A673 (cell line): ENCODE measurements at regions of chr1 and their contacts with region 1.

Region 1: DNA sequence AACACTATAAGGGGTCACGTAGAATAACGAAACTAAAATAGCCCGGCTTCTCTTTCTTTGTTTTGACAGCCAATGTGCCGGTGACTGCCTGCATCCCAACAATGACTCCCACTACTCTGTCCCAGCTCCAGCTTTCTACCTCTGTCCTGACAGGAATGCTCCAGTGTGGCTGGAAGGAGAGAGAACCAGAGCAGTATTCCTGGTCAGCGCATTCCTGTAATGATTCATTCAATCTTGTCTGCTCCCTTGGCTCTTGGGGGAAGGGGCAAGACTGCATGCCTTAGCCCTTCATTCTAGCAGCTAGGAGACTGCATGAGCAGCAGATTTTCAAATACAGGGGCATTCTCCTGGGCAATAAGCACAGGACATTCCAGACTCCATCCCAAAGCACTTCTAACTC is 132.1 kb upstream of the PRMT6 start:
- DNase-seq: peak; percentile 24
- H3K4me3 ChIP-seq: no peak overlapping the region
- H3K27ac ChIP-seq: peak overlapping the region; percentile 98
- H3K4me1 ChIP-seq: peaks cover 74% of the 10 kb centered on the region
- H3K27me3 ChIP-seq: no peaks in the 10 kb centered on the region
- CTCF ChIP-seq: no peak

Region 2: DNA sequence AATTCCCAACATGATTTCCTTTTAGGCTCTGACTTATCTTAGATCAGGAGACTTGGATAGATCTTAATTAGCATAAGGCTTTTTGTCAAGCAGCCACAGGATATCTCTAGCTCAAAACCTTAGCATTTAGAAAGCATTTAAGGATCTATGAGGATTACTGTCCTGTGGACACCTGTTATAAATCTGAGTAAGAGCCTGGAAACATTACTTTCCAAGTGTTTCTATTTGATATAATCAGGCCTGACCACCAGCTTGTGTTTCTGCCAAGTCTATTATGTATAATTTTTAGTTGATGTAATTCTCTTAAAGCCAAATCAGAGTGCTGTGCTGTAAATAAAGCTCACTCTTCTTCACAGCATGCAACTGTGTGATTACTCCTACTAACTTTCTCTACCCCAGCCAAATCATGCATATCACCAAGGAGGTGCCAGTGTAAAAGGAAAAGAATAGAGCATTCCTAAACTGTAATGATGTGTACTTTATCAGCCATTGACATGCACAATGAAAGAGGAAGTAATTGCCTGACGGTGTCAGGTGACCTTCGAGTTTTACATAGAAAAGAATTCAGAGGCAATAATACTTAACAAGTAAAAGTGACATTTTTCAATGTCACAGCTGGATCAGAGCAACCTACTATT is 177.8 kb before region 1 on chr1:
- CTCF ChIA-PET with region 1: no interaction called
- POLR2A ChIA-PET with region 1: no interaction called
- intact Hi-C with region 1: loop called (anchors 2 kb)
- DNase-seq: peak; percentile 97
- H3K4me3 ChIP-seq: no peak overlapping the region
- H3K27ac ChIP-seq: peak overlapping the region; percentile 55
- H3K4me1 ChIP-seq: peaks cover 33% of the 10 kb centered on the region
- H3K27me3 ChIP-seq: no peaks in the 10 kb centered on the region
- CTCF ChIP-seq: no peak

Region 3: DNA sequence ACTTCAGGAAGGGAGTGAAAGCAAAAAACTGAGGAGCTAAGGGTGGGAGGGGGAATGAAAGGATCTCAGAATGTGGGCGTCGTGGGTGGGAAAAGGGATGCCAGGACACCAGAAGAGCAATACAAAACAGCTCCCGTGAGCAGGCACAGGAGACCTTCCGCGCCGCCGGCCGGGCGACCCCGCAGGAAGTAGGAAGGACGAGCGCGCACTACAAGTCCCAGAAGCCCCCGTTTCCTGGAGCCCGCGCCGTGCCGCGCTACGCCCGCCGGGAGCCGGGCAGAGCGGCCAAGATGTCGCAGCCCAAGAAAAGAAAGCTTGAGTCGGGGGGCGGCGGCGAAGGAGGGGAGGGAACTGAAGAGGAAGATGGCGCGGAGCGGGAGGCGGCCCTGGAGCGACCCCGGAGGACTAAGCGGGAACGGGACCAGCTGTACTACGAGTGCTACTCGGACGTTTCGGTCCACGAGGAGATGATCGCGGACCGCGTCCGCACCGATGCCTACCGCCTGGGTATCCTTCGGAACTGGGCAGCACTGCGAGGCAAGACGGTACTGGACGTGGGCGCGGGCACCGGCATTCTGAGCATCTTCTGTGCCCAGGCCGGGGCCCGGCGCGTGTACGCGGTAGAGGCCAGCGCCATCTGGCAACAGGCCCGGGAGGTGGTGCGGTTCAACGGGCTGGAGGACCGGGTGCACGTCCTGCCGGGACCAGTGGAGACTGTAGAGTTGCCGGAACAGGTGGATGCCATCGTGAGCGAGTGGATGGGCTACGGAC is 132.3 kb after region 1 on chr1 and contains the start of gene PRMT6:
- CTCF ChIA-PET with region 1: no interaction called
- POLR2A ChIA-PET with region 1: no interaction called
- intact Hi-C with region 1: loop called (anchors 1 kb)
- DNase-seq: peak; percentile 94
- H3K4me3 ChIP-seq: peak within 1 kb of the TSS; percentile 78
- H3K27ac ChIP-seq: peak within 1 kb of the TSS; percentile 89
- H3K4me1 ChIP-seq: peaks cover 13% of the 10 kb centered on the region
- H3K27me3 ChIP-seq: no peaks in the 10 kb centered on the region
- CTCF ChIP-seq: no peak
- total RNA-seq, gene PRMT6: 50.4 and 53.0 TPM in 2 replicates

Region 4: GRCh38 chr1:107529502-107530149 is 605.3 kb after region 1 on chr1:
- CTCF ChIA-PET with region 1: no interaction called
- POLR2A ChIA-PET with region 1: no interaction called
- intact Hi-C with region 1: loop called (anchors 10 kb)
- DNase-seq: peak; percentile 87
- H3K4me3 ChIP-seq: no peak overlapping the region
- H3K27ac ChIP-seq: no peak overlapping the region
- H3K4me1 ChIP-seq: peaks cover 17% of the 10 kb centered on the region
- H3K27me3 ChIP-seq: no peaks in the 10 kb centered on the region
- CTCF ChIP-seq: peak; percentile 93